BJ (cell line): ENCODE measurements at regions of chr16 and their contacts with region 1.

Region 1: GRCh38 chr16:55465077-55465896 is 13.7 kb upstream of the MMP2 start:
- DNase-seq: no peak
- H3K4me3 ChIP-seq: no peak overlapping the region
- H3K27me3 ChIP-seq: no peaks in the 10 kb centered on the region; the same call in 1 of the 2 replicates
- CTCF ChIP-seq: peak; percentile 96

Region 2: DNA sequence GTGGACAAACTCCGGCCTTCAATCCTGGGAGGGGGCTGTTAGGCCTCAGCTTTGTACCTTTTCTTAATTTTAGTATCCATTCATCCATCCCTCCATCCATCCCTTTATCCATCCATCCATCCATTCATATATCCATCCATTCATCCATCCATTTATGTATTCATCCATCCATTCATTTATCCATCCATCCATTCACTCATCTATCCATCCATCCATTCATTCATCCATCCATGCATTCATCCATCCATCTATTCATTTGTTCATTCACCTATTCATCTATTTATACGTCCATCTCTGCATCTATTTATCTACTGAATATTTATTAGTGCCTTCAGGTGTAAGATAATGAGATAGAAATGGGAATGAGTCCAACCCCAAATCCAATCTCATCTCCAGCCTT is 12.3 kb before region 1 on chr16:
- CTCF ChIA-PET with region 1: interaction called, 23 read pairs
- POLR2A ChIA-PET with region 1: no interaction called
- DNase-seq: no peak
- H3K4me3 ChIP-seq: no peak overlapping the region
- H3K27me3 ChIP-seq: no peaks in the 10 kb centered on the region
- CTCF ChIP-seq: no peak

Region 3: DNA sequence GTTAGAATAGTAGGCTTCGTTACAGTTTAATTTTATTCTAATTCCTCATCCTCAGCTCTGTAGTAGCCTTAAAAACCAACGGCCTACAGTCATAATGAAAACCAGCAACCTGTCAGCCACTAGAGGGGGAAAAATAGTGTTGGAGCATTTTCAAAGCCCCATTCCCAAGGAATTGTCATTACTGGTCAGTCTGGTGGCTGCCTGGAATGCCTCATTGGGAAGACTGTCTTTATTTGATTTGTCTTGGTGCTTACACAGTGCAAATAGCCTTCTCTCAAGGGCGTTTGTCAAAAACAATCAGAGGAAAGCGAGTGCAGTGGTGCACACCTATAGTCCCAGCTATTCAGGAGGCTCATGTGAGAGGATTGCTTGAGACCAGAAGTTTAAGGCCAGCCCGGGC is 48.3 kb after region 1 on chr16:
- CTCF ChIA-PET with region 1: interaction called, 10 read pairs
- POLR2A ChIA-PET with region 1: no interaction called
- DNase-seq: no peak
- H3K4me3 ChIP-seq: no peak overlapping the region
- H3K27me3 ChIP-seq: no peaks in the 10 kb centered on the region
- CTCF ChIP-seq: no peak

Region 4: GRCh38 chr16:55552621-55553020 is 87.3 kb after region 1 on chr16:
- CTCF ChIA-PET with region 1: interaction called, 123 read pairs
- POLR2A ChIA-PET with region 1: no interaction called
- DNase-seq: no peak
- H3K4me3 ChIP-seq: no peak overlapping the region
- H3K27me3 ChIP-seq: no peaks in the 10 kb centered on the region
- CTCF ChIP-seq: no peak

Region 5: DNA sequence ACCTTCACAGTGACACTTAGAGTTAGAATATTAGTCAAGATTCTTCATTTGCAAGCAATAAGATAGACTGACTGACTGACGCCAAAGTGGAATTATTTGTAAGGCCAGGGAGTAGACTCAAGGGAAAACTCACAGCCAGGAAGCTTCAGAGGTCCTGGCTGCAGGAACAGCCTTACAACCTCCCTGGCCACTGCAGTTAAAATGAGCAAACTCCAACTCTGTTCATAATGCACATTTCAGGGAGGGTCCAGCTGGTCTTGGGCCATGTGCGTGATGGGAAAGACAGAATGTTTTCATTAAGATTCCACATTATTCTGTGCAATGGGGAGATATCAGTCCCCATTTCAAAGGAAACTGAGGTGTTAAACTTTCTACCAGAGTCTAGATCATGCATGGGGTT is 111.1 kb after region 1 on chr16:
- CTCF ChIA-PET with region 1: interaction called, 13 read pairs
- POLR2A ChIA-PET with region 1: no interaction called
- DNase-seq: no peak
- H3K4me3 ChIP-seq: no peak overlapping the region
- H3K27me3 ChIP-seq: no peaks in the 10 kb centered on the region
- CTCF ChIP-seq: no peak

Region 6: DNA sequence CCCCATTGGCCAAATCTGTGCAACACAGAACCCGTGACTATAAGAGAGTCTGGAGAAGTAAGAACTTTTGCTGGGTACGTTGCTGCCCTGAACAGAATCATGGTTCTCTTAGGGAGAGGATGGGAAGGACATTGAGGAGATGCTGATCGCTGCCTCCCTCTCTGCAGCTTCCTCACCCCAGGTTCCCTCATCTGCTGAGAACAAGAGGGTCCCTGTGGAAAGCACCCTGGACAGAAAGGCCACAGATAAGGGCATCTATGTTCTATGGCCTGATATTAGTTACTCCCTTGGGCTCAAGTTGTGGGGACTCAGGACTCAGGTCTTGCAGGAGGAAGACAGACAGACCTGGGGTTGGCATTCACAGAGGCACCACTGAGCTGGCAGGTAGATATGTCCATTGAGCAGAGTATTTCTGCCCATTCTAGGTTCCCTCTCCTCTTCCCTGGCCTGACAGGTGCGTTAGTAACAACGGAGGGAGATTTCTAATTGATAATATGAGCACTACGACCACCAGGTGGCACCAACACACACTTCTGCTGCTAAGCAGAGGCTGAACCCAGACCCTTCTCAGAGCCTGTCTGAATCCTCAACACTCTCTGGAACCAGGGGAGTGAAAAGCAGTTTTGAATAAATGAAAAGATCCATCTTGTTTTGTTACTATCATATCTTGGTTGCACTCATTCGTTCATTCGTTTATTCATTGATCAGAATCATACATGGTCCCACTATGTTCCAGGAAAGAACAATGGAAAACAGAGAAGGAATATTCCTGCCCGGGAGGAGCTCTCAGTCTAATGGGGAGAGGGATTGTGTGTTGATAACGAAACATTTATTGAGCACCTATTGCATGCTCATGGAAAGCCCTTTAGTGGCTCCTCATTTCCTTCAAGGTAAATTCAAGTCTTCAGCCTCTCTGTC is 246.9 kb after region 1 on chr16:
- CTCF ChIA-PET with region 1: interaction called, 439 read pairs
- POLR2A ChIA-PET with region 1: no interaction called
- DNase-seq: no peak
- H3K4me3 ChIP-seq: no peak overlapping the region
- H3K27me3 ChIP-seq: no peaks in the 10 kb centered on the region; the same call in 1 of the 2 replicates
- CTCF ChIP-seq: peak; percentile 69